ENCODE measurements at regions of chr7 and their contacts with region 1.

Region 1: GRCh38 chr7:19708397-19709248 is at the start of gene POLR1F:
- DNase-seq: peak; percentile 92 to 97 (median 95)
- H3K4me3 ChIP-seq: peak within 1 kb of the TSS; percentile 63 to 89
- H3K4me3 Mint-ChIP-seq: peak within 1 kb of the TSS; percentile 94 to 98 (median 97)
- H3K27ac ChIP-seq: peak within 1 kb of the TSS; percentile 84
- H3K27ac Mint-ChIP-seq: peak within 1 kb of the TSS; percentile 92 to 99 (median 98)
- H3K4me1 ChIP-seq: peaks cover 28% of the 10 kb centered on the region
- H3K4me1 Mint-ChIP-seq: peaks cover 36 to 56% (median 47%) of the 10 kb centered on the region in 4 donors
- H3K27me3 ChIP-seq: no peaks in the 10 kb centered on the region
- H3K27me3 Mint-ChIP-seq: no peaks in the 10 kb centered on the region
- total RNA-seq, gene POLR1F: 11.9 to 12.4 TPM

Region 2: GRCh38 chr7:19698331-19698730 is 10.3 kb before region 1 on chr7:
- CTCF ChIA-PET with region 1: interaction called, 16 read pairs
- POLR2A ChIA-PET with region 1: interaction called, 3 read pairs
- intact Hi-C with region 1: no loop called
- DNase-seq: no peak
- H3K4me3 ChIP-seq: no peak overlapping the region
- H3K4me3 Mint-ChIP-seq: no peak overlapping the region
- H3K27ac ChIP-seq: no peak overlapping the region
- H3K27ac Mint-ChIP-seq: peak overlapping the region in 1 of 7 donors; percentile 60
- H3K4me1 ChIP-seq: no peaks in the 10 kb centered on the region
- H3K4me1 Mint-ChIP-seq: peaks cover 0 to 4% (median 0%) of the 10 kb centered on the region in 4 donors
- H3K27me3 ChIP-seq: no peaks in the 10 kb centered on the region
- H3K27me3 Mint-ChIP-seq: no peaks in the 10 kb centered on the region

Region 3: GRCh38 chr7:19747740-19748339 is 39.2 kb after region 1 on chr7:
- CTCF ChIA-PET with region 1: interaction called, 11 read pairs
- POLR2A ChIA-PET with region 1: no interaction called
- intact Hi-C with region 1: loop called (anchors 2 kb)
- DNase-seq: peak in 3 of 5 donors; percentile 2 to 5 (median 2)
- H3K4me3 ChIP-seq: no peak overlapping the region
- H3K4me3 Mint-ChIP-seq: no peak overlapping the region
- H3K27ac ChIP-seq: no peak overlapping the region
- H3K27ac Mint-ChIP-seq: no peak overlapping the region
- H3K4me1 ChIP-seq: no peaks in the 10 kb centered on the region
- H3K4me1 Mint-ChIP-seq: no peaks in the 10 kb centered on the region
- H3K27me3 ChIP-seq: no peaks in the 10 kb centered on the region
- H3K27me3 Mint-ChIP-seq: peaks cover 1 to 3% of the 10 kb centered on the region in 2 donors

Region 4: GRCh38 chr7:19754521-19755116 is 46.0 kb after region 1 on chr7:
- CTCF ChIA-PET with region 1: interaction called, 10 read pairs
- POLR2A ChIA-PET with region 1: no interaction called
- intact Hi-C with region 1: loop called (anchors 2 kb)
- DNase-seq: peak in 4 of 5 donors; percentile 6 to 26 (median 16)
- H3K4me3 ChIP-seq: no peak overlapping the region
- H3K4me3 Mint-ChIP-seq: no peak overlapping the region
- H3K27ac ChIP-seq: no peak overlapping the region
- H3K27ac Mint-ChIP-seq: no peak overlapping the region
- H3K4me1 ChIP-seq: no peaks in the 10 kb centered on the region
- H3K4me1 Mint-ChIP-seq: no peaks in the 10 kb centered on the region
- H3K27me3 ChIP-seq: no peaks in the 10 kb centered on the region
- H3K27me3 Mint-ChIP-seq: no peaks in the 10 kb centered on the region

Region 5: GRCh38 chr7:20598459-20599309 is 890.1 kb after region 1 on chr7:
- CTCF ChIA-PET with region 1: interaction called, 172 read pairs
- POLR2A ChIA-PET with region 1: no interaction called
- intact Hi-C with region 1: loop called (anchors 1 kb)
- DNase-seq: peak in 4 of 5 donors; percentile 27 to 38 (median 31)
- H3K4me3 ChIP-seq: no peak overlapping the region
- H3K4me3 Mint-ChIP-seq: no peak overlapping the region
- H3K27ac ChIP-seq: no peak overlapping the region
- H3K27ac Mint-ChIP-seq: peak overlapping the region in 1 of 7 donors; percentile 0
- H3K4me1 ChIP-seq: no peaks in the 10 kb centered on the region
- H3K4me1 Mint-ChIP-seq: peaks cover 0 to 6% (median 0%) of the 10 kb centered on the region in 4 donors
- H3K27me3 ChIP-seq: no peaks in the 10 kb centered on the region
- H3K27me3 Mint-ChIP-seq: peaks cover 2 to 7% of the 10 kb centered on the region in 2 donors

Region 6: GRCh38 chr7:21427182-21427870 is 1718.7 kb after region 1 on chr7:
- CTCF ChIA-PET with region 1: no interaction called
- POLR2A ChIA-PET with region 1: no interaction called
- intact Hi-C with region 1: loop called (anchors 1 kb)
- DNase-seq: peak; percentile 99 to 100 (median 100)
- H3K4me3 ChIP-seq: peak overlapping the region; percentile 93
- H3K4me3 Mint-ChIP-seq: peak overlapping the region; percentile 95 to 100 (median 99)
- H3K27ac ChIP-seq: peak overlapping the region; percentile 93
- H3K27ac Mint-ChIP-seq: peak overlapping the region; percentile 98 to 100 (median 99)
- H3K4me1 ChIP-seq: peaks cover 49% of the 10 kb centered on the region
- H3K4me1 Mint-ChIP-seq: peaks cover 30 to 56% (median 43%) of the 10 kb centered on the region in 4 donors
- H3K27me3 ChIP-seq: no peaks in the 10 kb centered on the region
- H3K27me3 Mint-ChIP-seq: no peaks in the 10 kb centered on the region